ENCODE measurements at regions of chr3 and their contacts with region 1.

Region 1: GRCh38 chr3:56837196-56837955 is 35.6 kb upstream of the ARHGEF3 start:
- DNase-seq: peak; percentile 21
- ATAC-seq: peak; percentile 98
- H3K4me3 ChIP-seq: no peak overlapping the region
- H3K27ac ChIP-seq: no peak overlapping the region
- H3K4me1 ChIP-seq: peaks cover 7% of the 10 kb centered on the region
- H3K27me3 ChIP-seq: no peaks in the 10 kb centered on the region
- CTCF ChIP-seq: no peak
- EP300 ChIP-seq: 0 out of 4 replicates have a peak, but pooled peaks of 1 of the 2 experiments have one; percentile 16
- POLR2A ChIP-seq: no peak
- RAD21 ChIP-seq: no peak

Region 2: DNA sequence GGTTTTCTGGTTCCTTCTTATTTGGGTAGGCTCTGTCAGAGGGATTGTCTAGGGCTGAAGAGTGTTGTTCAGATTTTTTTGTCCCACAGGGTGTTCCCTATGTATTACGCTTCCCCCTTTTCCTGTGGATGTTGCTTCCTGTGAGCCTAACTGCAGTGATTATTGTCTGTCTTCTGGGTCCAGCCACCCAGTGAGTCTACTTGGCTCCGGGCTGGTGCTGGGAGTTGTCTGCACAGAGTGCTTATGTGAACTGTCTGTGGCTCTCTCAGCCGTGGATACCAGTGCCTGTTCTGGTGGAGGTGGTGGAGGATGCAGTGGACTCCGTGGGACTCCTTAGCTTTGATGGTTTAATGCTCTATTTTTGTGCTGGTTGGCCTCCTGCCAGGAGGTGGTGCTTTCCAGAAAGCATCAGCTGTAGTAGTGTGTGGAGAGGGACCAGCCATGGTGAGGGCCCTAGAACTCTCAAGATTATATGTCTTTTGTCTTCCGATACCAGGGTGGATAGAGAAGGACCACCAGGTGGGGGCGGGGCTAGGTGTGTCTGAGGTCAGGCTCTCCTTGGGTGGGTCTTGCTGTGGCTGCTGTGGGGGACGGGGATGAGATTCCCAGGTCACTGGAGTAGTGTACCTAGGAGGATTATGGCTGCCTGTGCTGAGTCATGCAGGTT is 226.6 kb before region 1 on chr3:
- CTCF ChIA-PET with region 1: no interaction called
- POLR2A ChIA-PET with region 1: no interaction called
- RAD21 ChIA-PET with region 1: no interaction called
- SMC1A ChIA-PET with region 1: no interaction called
- in situ Hi-C with region 1: no loop called
- intact Hi-C with region 1: no loop called
- DNase-seq: no peak
- ATAC-seq: no peak
- H3K4me3 ChIP-seq: no peak overlapping the region
- H3K27ac ChIP-seq: no peak overlapping the region
- H3K4me1 ChIP-seq: no peaks in the 10 kb centered on the region
- H3K27me3 ChIP-seq: no peaks in the 10 kb centered on the region
- CTCF ChIP-seq: no peak
- EP300 ChIP-seq: no peak
- POLR2A ChIP-seq: no peak
- RAD21 ChIP-seq: no peak

Region 3: DNA sequence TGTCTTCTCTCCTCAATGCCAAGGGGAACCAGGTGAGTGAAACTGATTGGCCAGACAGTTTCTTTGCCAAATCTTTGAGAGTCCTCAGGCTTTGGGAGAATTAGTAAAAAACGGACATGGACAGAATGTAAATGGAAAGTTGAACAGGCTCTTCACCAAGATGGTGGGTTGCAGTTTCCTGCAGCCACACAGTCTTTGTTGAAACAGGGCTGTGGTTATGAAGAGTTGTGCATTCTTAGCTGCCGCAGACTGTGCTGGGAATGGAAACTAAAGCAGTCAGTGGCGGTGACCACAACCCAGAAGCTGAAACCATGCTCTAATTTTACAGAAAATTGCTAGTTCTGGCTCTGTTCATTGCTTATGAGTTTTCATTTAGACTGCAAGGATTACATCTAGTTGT is 112.2 kb before region 1 on chr3:
- CTCF ChIA-PET with region 1: no interaction called
- POLR2A ChIA-PET with region 1: interaction called, 10 read pairs
- RAD21 ChIA-PET with region 1: no interaction called
- SMC1A ChIA-PET with region 1: no interaction called
- in situ Hi-C with region 1: no loop called
- intact Hi-C with region 1: no loop called
- DNase-seq: peak; percentile 87
- ATAC-seq: peak; percentile 95
- H3K4me3 ChIP-seq: peak overlapping the region; percentile 34
- H3K27ac ChIP-seq: peak overlapping the region; percentile 70
- H3K4me1 ChIP-seq: peaks cover 26% of the 10 kb centered on the region
- H3K27me3 ChIP-seq: no peaks in the 10 kb centered on the region
- CTCF ChIP-seq: no peak
- EP300 ChIP-seq: peak in 1 of 2 experiments; percentile 78; a peak in 1 of 4 replicates
- POLR2A ChIP-seq: no peak
- RAD21 ChIP-seq: peak; percentile 15; the same call in 1 of the 2 replicates

Region 4: GRCh38 chr3:56825567-56826438 is 11.6 kb before region 1 on chr3:
- CTCF ChIA-PET with region 1: interaction called, 10 read pairs
- POLR2A ChIA-PET with region 1: no interaction called
- RAD21 ChIA-PET with region 1: interaction called, 4 read pairs
- SMC1A ChIA-PET with region 1: interaction called, 19 read pairs
- in situ Hi-C with region 1: no loop called
- intact Hi-C with region 1: no loop called
- DNase-seq: no peak
- ATAC-seq: peak; percentile 46
- H3K4me3 ChIP-seq: no peak overlapping the region
- H3K27ac ChIP-seq: no peak overlapping the region
- H3K4me1 ChIP-seq: peaks cover 6% of the 10 kb centered on the region
- H3K27me3 ChIP-seq: no peaks in the 10 kb centered on the region
- CTCF ChIP-seq: no peak
- EP300 ChIP-seq: no peak
- POLR2A ChIP-seq: no peak
- RAD21 ChIP-seq: no peak

Region 5: DNA sequence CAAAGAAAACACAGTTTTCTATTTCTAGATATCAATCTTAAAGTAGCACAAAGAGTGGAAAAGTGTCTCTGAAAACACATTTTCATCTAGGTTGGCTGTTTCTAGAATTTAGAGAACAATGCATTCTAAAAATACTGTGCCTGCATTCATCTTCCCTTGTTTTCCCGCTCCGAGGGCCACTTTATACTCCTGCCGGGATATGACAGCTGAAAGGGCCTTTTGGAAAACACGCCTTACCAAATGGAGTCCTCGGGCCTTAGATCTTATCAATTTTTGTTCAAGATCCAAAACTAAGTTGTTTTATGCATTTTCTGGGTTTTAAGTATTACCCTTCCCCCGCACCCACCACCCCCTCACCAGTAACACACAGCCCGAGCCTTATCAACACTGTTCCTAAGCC is 12.3 kb after region 1 on chr3:
- CTCF ChIA-PET with region 1: interaction called, 18 read pairs
- POLR2A ChIA-PET with region 1: no interaction called
- RAD21 ChIA-PET with region 1: no interaction called
- SMC1A ChIA-PET with region 1: interaction called, 32 read pairs
- in situ Hi-C with region 1: no loop called
- intact Hi-C with region 1: no loop called
- DNase-seq: no peak
- ATAC-seq: no peak
- H3K4me3 ChIP-seq: no peak overlapping the region
- H3K27ac ChIP-seq: no peak overlapping the region
- H3K4me1 ChIP-seq: no peaks in the 10 kb centered on the region
- H3K27me3 ChIP-seq: no peaks in the 10 kb centered on the region
- CTCF ChIP-seq: no peak
- EP300 ChIP-seq: no peak
- POLR2A ChIP-seq: no peak
- RAD21 ChIP-seq: no peak

Region 6: GRCh38 chr3:56855856-56856512 is 18.6 kb after region 1 on chr3:
- CTCF ChIA-PET with region 1: interaction called, 18 read pairs
- POLR2A ChIA-PET with region 1: no interaction called
- RAD21 ChIA-PET with region 1: interaction called, 3 read pairs
- SMC1A ChIA-PET with region 1: interaction called, 32 read pairs
- in situ Hi-C with region 1: no loop called
- intact Hi-C with region 1: no loop called
- DNase-seq: no peak
- ATAC-seq: peak; percentile 90
- H3K4me3 ChIP-seq: 0 out of 2 replicates have a peak overlapping the region, but pooled peaks have one; percentile 20
- H3K27ac ChIP-seq: no peak overlapping the region
- H3K4me1 ChIP-seq: no peaks in the 10 kb centered on the region
- H3K27me3 ChIP-seq: no peaks in the 10 kb centered on the region
- CTCF ChIP-seq: peak; percentile 63 to 86 (median 79)
- EP300 ChIP-seq: no peak
- POLR2A ChIP-seq: no peak
- RAD21 ChIP-seq: peak; percentile 85

Region 7: GRCh38 chr3:56862352-56863074 is 25.1 kb after region 1 on chr3:
- CTCF ChIA-PET with region 1: interaction called, 5 read pairs
- POLR2A ChIA-PET with region 1: no interaction called
- RAD21 ChIA-PET with region 1: interaction called, 3 read pairs
- SMC1A ChIA-PET with region 1: interaction called, 7 read pairs
- in situ Hi-C with region 1: no loop called
- intact Hi-C with region 1: loop called (anchors 1 kb)
- DNase-seq: no peak
- ATAC-seq: peak; percentile 73
- H3K4me3 ChIP-seq: no peak overlapping the region
- H3K27ac ChIP-seq: no peak overlapping the region; the same call in 1 of the 2 replicates
- H3K4me1 ChIP-seq: peaks cover 23% of the 10 kb centered on the region
- H3K27me3 ChIP-seq: no peaks in the 10 kb centered on the region
- CTCF ChIP-seq: no peak
- EP300 ChIP-seq: no peak; a peak in 1 of 4 replicates
- POLR2A ChIP-seq: no peak
- RAD21 ChIP-seq: 0 out of 2 replicates have a peak, but pooled peaks have one; percentile 9